Vagina (tissue), 2 donors: ENCODE measurements at regions of chr5 and their contacts with region 1.

Region 1: GRCh38 chr5:115098041-115098702 is 71.5 kb downstream of the TRIM36 start:
- DNase-seq: no peak
- H3K4me3 ChIP-seq: no peak overlapping the region
- H3K27ac ChIP-seq: no peak overlapping the region
- H3K4me1 ChIP-seq: no peaks in the 10 kb centered on the region
- H3K27me3 ChIP-seq: no peaks in the 10 kb centered on the region
- CTCF ChIP-seq: peak in 1 of 3 experiments; percentile 43
- POLR2A ChIP-seq: no peak

Region 2: GRCh38 chr5:115246361-115246991 is 148.3 kb after region 1 on chr5:
- intact Hi-C with region 1: loop called (anchors 10 kb)
- DNase-seq: no peak
- H3K4me3 ChIP-seq: no peak overlapping the region
- H3K27ac ChIP-seq: no peak overlapping the region
- H3K4me1 ChIP-seq: peaks cover 18% of the 10 kb centered on the region
- H3K27me3 ChIP-seq: no peaks in the 10 kb centered on the region
- CTCF ChIP-seq: peak in 2 of 3 experiments; percentile 35 to 54
- POLR2A ChIP-seq: no peak